Naive thymus-derived CD4-positive, alpha-beta T cell (primary cell): ENCODE measurements at regions of chr1 and their contacts with region 1.

Region 1: DNA sequence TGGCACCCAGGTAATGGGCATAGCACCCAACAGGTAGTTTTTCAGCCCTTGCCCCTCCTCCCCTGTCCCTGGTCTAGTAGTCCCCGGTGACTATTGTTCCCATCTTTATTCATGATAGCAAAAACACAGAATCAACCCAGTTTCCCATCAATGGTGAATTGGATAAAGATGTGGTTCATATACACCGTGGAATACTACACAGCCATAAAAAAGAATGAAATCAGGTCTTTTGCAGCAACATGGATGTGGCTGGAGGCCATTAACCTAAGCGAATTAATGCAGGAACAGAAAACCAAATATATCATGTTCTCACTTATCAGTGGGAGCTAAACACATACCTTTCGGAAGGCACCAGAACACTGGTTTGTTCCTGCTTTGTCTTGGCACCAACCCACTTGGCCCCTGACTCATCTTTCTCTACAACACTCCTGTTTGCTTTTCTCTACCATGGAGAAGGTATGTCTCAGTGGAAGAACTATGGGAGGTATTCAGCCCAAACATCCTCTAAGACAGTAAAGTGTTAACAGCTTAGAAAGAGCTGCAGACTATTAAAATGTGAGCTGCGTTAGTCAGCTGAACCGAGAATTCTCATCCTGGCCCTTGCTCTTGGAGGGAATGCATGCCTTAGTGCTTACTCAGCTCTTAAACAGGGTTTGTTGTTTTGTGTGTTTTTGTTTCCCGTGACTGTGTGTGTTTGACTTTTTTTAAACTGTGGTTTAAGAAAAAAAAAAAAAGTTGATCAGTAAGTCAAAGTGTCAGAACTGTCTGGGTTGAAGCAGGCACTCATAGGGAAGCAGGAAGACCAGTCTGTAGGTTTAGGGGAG is 203.0 kb downstream of the TOMM20 start:
- DNase-seq: peak in 3 of 9 donors; percentile 25 to 35 (median 30)
- ATAC-seq: peak; percentile 50
- H3K4me3 ChIP-seq: no peak overlapping the region
- H3K4me3 Mint-ChIP-seq: peak overlapping the region; percentile 45 to 80 (median 66)
- H3K27ac ChIP-seq: no peak overlapping the region
- H3K27ac Mint-ChIP-seq: peak overlapping the region; percentile 80 to 93 (median 83)
- H3K4me1 ChIP-seq: peaks cover 26 to 47% of the 10 kb centered on the region in 2 donors
- H3K4me1 Mint-ChIP-seq: peaks cover 37 to 60% (median 55%) of the 10 kb centered on the region in 7 donors
- H3K27me3 ChIP-seq: no peaks in the 10 kb centered on the region
- H3K27me3 Mint-ChIP-seq: no peaks in the 10 kb centered on the region

Region 2: GRCh38 chr1:234599617-234600417 is 325.8 kb before region 1 on chr1:
- CTCF ChIA-PET with region 1: no interaction called
- POLR2A ChIA-PET with region 1: no interaction called
- intact Hi-C with region 1: loop called in 1 of 2 experiments (anchors 1 kb)
- DNase-seq: peak; percentile 52 to 88 (median 62)
- ATAC-seq: peak; percentile 74
- H3K4me3 ChIP-seq: peak overlapping the region; percentile 61
- H3K4me3 Mint-ChIP-seq: peak overlapping the region; percentile 75 to 97 (median 89)
- H3K27ac ChIP-seq: peak overlapping the region; percentile 96
- H3K27ac Mint-ChIP-seq: peak overlapping the region; percentile 87 to 99 (median 95)
- H3K4me1 ChIP-seq: peaks cover 51 to 54% of the 10 kb centered on the region in 2 donors
- H3K4me1 Mint-ChIP-seq: peaks cover 24 to 68% (median 56%) of the 10 kb centered on the region in 7 donors
- H3K27me3 ChIP-seq: no peaks in the 10 kb centered on the region
- H3K27me3 Mint-ChIP-seq: no peaks in the 10 kb centered on the region

Region 3: GRCh38 chr1:234772345-234773147 is 153.1 kb before region 1 on chr1:
- CTCF ChIA-PET with region 1: no interaction called
- POLR2A ChIA-PET with region 1: no interaction called
- intact Hi-C with region 1: loop called in 1 of 2 experiments (anchors 1 kb)
- DNase-seq: peak; percentile 42 to 88 (median 64)
- ATAC-seq: peak; percentile 88
- H3K4me3 ChIP-seq: peak overlapping the region; percentile 7
- H3K4me3 Mint-ChIP-seq: peak overlapping the region; percentile 55 to 83 (median 74)
- H3K27ac ChIP-seq: peak overlapping the region; percentile 64
- H3K27ac Mint-ChIP-seq: peak overlapping the region; percentile 79 to 95 (median 90)
- H3K4me1 ChIP-seq: peaks cover 14 to 53% of the 10 kb centered on the region in 2 donors
- H3K4me1 Mint-ChIP-seq: peaks cover 39 to 69% (median 54%) of the 10 kb centered on the region in 7 donors
- H3K27me3 ChIP-seq: no peaks in the 10 kb centered on the region
- H3K27me3 Mint-ChIP-seq: no peaks in the 10 kb centered on the region

Region 4: DNA sequence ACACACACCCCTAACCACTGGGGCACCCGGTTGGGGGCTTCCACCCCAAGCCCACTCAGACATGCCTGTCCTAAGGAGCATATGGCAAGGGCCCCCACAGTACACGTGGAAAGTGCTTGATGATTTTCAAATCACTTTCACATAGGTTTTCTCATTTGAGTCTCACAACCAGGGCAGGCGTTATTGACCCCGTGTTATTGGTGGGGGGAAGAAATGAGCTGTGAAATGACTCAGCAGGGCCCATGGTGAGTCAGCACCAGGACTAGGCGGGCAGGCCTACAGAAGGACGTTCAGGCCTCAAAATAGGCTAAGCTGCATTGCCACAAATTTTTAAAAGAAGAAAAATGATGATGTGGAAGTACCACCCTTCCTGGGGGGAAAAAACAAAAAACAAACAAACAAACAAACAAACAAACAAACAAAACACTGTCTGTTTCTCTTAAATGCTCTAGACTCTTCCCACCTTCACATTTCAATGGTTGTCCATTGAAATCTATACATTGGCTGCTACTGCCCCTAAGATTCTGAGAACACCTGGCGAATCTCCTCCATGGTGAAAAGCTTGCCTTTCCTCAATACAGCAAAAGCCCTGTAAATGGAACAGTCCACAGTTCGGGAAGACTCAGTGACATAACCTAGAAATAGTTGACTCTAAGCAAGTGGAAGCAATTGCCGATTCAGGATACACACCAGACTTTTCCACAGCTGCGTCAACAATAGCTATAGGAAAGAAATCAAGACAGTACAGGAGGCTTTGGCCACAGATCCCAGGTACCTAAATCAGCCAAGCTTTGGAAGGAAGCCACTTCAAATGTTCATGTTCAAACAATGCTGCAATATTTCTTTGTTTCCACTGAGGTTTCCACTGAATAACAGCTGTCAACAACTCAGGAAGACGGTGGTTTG is 31.7 kb before region 1 on chr1:
- CTCF ChIA-PET with region 1: no interaction called
- POLR2A ChIA-PET with region 1: no interaction called
- intact Hi-C with region 1: loop called in 1 of 2 experiments (anchors 5 kb)
- DNase-seq: peak in 2 of 9 donors; percentile 12 to 34
- ATAC-seq: no peak
- H3K4me3 ChIP-seq: no peak overlapping the region
- H3K4me3 Mint-ChIP-seq: peak overlapping the region in 2 of 10 donors; percentile 33 to 42
- H3K27ac ChIP-seq: no peak overlapping the region
- H3K27ac Mint-ChIP-seq: peak overlapping the region in 5 of 9 donors; percentile 6 to 78 (median 32)
- H3K4me1 ChIP-seq: no peaks in the 10 kb centered on the region
- H3K4me1 Mint-ChIP-seq: peaks cover 11 to 60% (median 22%) of the 10 kb centered on the region in 7 donors
- H3K27me3 ChIP-seq: no peaks in the 10 kb centered on the region
- H3K27me3 Mint-ChIP-seq: no peaks in the 10 kb centered on the region

Region 5: GRCh38 chr1:234963180-234963903 is 37.7 kb after region 1 on chr1:
- CTCF ChIA-PET with region 1: interaction called, 3 read pairs
- POLR2A ChIA-PET with region 1: no interaction called
- intact Hi-C with region 1: loop called (anchors 1 to 2 kb)
- DNase-seq: peak; percentile 55 to 90 (median 75)
- ATAC-seq: peak; percentile 93
- H3K4me3 ChIP-seq: peak overlapping the region; percentile 41
- H3K4me3 Mint-ChIP-seq: peak overlapping the region; percentile 68 to 87 (median 80)
- H3K27ac ChIP-seq: peak overlapping the region; percentile 79
- H3K27ac Mint-ChIP-seq: peak overlapping the region; percentile 88 to 97 (median 93)
- H3K4me1 ChIP-seq: peaks cover 36 to 55% of the 10 kb centered on the region in 2 donors
- H3K4me1 Mint-ChIP-seq: peaks cover 55 to 75% (median 69%) of the 10 kb centered on the region in 7 donors
- H3K27me3 ChIP-seq: no peaks in the 10 kb centered on the region
- H3K27me3 Mint-ChIP-seq: no peaks in the 10 kb centered on the region

Region 6: GRCh38 chr1:234978397-234979295 is 53.0 kb after region 1 on chr1:
- CTCF ChIA-PET with region 1: interaction called, 3 read pairs
- POLR2A ChIA-PET with region 1: interaction called, 5 read pairs
- intact Hi-C with region 1: loop called in 1 of 2 experiments (anchors 2 kb)
- DNase-seq: peak in 4 of 9 donors; percentile 9 to 49 (median 40)
- ATAC-seq: peak; percentile 62
- H3K4me3 ChIP-seq: no peak overlapping the region
- H3K4me3 Mint-ChIP-seq: peak overlapping the region; percentile 16 to 78 (median 69)
- H3K27ac ChIP-seq: peak overlapping the region; percentile 18
- H3K27ac Mint-ChIP-seq: peak overlapping the region; percentile 66 to 94 (median 81)
- H3K4me1 ChIP-seq: peaks cover 34 to 48% of the 10 kb centered on the region in 2 donors
- H3K4me1 Mint-ChIP-seq: peaks cover 38 to 79% (median 45%) of the 10 kb centered on the region in 7 donors
- H3K27me3 ChIP-seq: no peaks in the 10 kb centered on the region
- H3K27me3 Mint-ChIP-seq: no peaks in the 10 kb centered on the region

Region 7: DNA sequence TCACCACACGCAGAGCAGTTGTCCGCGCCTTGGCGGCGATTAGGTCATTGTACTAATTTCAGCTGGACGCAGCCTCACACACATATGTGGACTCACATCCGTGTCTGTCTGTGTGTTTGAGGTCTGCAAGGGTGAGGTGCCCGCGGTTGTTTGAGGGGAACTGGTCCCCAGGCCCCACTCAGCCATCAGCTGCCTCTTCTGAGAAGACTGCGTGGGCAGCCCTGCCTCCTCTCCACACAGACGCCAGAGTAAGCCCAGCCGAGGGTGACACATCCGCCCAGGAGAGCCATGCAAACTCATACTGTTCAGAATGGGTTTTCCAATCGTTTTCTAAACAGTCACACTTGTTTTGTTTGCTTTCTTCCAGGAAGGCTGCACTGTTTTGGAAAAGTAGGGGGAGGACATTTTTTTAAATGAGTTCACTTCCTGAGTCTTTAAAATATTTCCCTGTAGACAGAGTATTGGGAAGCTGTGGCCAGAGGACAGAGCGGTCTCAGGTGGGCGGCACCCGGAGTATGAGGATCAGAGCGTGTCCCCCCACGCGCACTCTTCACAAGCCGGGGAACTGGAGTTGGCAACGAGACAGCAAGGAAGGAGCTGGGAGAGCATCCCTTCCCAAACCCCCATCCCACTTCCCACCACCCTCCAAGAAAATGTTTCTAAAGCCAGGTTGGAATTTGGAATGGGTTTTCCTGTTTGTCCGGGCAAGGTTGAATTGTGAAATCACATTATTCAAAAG is 149.7 kb after region 1 on chr1:
- CTCF ChIA-PET with region 1: no interaction called
- POLR2A ChIA-PET with region 1: no interaction called
- intact Hi-C with region 1: loop called (anchors 5 kb)
- DNase-seq: peak in 1 of 9 donors; percentile 76
- ATAC-seq: peak; percentile 44
- H3K4me3 ChIP-seq: peak overlapping the region; percentile 31
- H3K4me3 Mint-ChIP-seq: peak overlapping the region in 1 of 10 donors; percentile 65
- H3K27ac ChIP-seq: no peak overlapping the region
- H3K27ac Mint-ChIP-seq: peak overlapping the region in 1 of 9 donors; percentile 90
- H3K4me1 ChIP-seq: peaks cover 0 to 10% of the 10 kb centered on the region in 2 donors
- H3K4me1 Mint-ChIP-seq: peaks cover 0 to 38% (median 6%) of the 10 kb centered on the region in 7 donors
- H3K27me3 ChIP-seq: no peaks in the 10 kb centered on the region
- H3K27me3 Mint-ChIP-seq: no peaks in the 10 kb centered on the region